B cell (primary cell): ENCODE measurements at regions of chr2 and their contacts with region 1.

Region 1: DNA sequence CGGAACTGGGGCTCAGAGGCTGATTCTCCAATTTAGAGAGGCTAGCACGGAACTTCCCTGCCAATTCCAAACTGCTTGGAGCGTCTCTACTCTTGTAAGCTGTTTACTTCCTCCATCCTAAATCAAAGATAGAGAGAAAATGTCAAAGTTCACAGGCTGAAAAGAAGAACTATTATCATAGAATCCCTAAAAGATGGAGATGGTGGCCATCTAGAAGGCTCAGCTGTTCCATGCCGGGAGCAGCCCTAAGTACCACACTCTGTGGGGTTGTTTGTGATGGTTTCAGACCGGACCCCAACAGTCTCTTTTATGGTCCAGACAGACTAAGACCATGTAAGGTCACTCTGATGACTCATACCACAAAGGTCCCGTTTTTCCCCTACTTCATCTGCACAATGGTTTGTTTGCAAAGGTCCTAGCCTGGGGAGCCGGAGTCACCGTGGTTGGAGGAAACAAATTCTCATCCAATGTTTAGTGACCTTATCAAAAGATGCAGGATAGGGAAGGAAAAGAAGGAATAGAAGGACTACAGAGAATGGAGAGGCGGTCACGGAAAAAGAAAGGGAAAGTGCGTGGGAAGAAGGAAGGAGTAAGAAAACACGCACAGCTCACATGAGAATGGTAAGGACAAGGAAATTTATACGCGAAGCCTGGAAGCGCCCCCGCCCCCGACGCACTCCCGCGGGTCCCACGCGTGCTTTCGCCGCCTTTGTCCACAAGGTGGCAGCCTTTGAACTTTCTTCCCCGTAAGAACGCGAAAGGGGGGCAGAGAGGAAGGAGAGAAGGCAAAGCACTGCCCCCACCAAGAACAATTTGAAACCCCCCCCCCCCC is 453 bp upstream of the ANTXR1 start:
- DNase-seq: peak; percentile 64
- ATAC-seq: peak; percentile 36
- H3K4me3 ChIP-seq: peak overlapping the region in 4 of 5 experiments; percentile 41 to 66 (median 55)
- H3K4me3 Mint-ChIP-seq: peak overlapping the region; percentile 88
- H3K27ac ChIP-seq: no peak overlapping the region
- H3K27ac Mint-ChIP-seq: no peak overlapping the region
- H3K4me1 ChIP-seq: peaks cover 19 to 20% of the 10 kb centered on the region in 2 donors
- H3K4me1 Mint-ChIP-seq: peaks cover 17% of the 10 kb centered on the region
- H3K27me3 ChIP-seq: peaks cover 0 to 41% (median 34%) of the 10 kb centered on the region in 4 experiments
- H3K27me3 Mint-ChIP-seq: peaks cover 58% of the 10 kb centered on the region
- CTCF ChIP-seq: peak; percentile 79

Region 2: GRCh38 chr2:68214381-68214780 is 798.1 kb before region 1 on chr2:
- CTCF ChIA-PET with region 1: no interaction called
- POLR2A ChIA-PET with region 1: no interaction called
- intact Hi-C with region 1: no loop called
- DNase-seq: no peak
- ATAC-seq: peak; percentile 28
- H3K4me3 ChIP-seq: no peak overlapping the region
- H3K4me3 Mint-ChIP-seq: peak overlapping the region; percentile 46
- H3K27ac ChIP-seq: no peak overlapping the region
- H3K27ac Mint-ChIP-seq: peak overlapping the region; percentile 27
- H3K4me1 ChIP-seq: peaks cover 12 to 28% of the 10 kb centered on the region in 2 donors
- H3K4me1 Mint-ChIP-seq: peaks cover 73% of the 10 kb centered on the region
- H3K27me3 ChIP-seq: no peaks in the 10 kb centered on the region
- H3K27me3 Mint-ChIP-seq: no peaks in the 10 kb centered on the region
- CTCF ChIP-seq: no peak

Region 3: GRCh38 chr2:68889500-68890185 is 122.9 kb before region 1 on chr2:
- CTCF ChIA-PET with region 1: no interaction called
- POLR2A ChIA-PET with region 1: no interaction called
- intact Hi-C with region 1: no loop called
- DNase-seq: no peak
- ATAC-seq: no peak
- H3K4me3 ChIP-seq: no peak overlapping the region
- H3K4me3 Mint-ChIP-seq: no peak overlapping the region
- H3K27ac ChIP-seq: no peak overlapping the region
- H3K27ac Mint-ChIP-seq: no peak overlapping the region
- H3K4me1 ChIP-seq: no peaks in the 10 kb centered on the region
- H3K4me1 Mint-ChIP-seq: no peaks in the 10 kb centered on the region
- H3K27me3 ChIP-seq: no peaks in the 10 kb centered on the region
- H3K27me3 Mint-ChIP-seq: no peaks in the 10 kb centered on the region
- CTCF ChIP-seq: no peak

Region 4: DNA sequence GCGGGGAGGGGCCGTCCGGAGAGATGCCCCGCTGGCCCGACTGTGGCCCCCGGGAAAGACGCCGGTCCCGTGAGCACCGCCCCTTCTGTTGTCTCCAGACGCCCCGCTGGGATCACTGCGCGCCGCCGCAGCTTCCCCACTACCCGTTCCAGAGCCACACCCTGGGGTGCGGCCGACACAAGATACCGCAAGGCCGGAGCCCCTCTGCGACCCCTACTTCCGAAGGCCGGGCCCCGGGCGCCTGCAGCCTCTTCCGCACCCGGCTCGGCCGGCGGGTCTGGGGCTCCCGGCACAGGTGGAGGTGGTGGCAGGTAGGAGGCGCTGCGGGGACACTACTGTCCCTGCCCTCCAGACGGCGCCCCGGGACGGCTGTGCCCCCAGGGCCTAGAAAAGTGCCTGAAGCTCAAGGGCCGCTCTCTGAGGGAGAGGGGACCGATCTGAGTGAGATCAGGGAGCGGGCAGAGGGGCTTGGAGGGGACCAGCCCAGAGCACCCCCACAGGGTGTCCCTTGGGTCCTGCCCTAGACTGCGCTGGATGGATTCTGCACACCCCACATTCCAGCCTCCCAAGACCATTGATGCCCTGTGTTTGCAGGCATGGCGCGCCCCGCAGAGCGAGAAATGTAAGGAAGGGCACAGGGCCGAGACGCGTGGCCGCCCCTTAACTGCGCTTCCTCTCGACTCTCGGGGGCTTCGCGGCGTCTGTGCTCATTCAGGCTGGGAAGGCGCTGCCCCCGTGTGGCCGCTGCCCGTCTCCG is 294.5 kb after region 1 on chr2:
- CTCF ChIA-PET with region 1: interaction called, 5 read pairs
- POLR2A ChIA-PET with region 1: no interaction called
- intact Hi-C with region 1: loop called (anchors 1 kb)
- DNase-seq: peak; percentile 80
- ATAC-seq: peak; percentile 89
- H3K4me3 ChIP-seq: peak overlapping the region; percentile 48 to 69 (median 64)
- H3K4me3 Mint-ChIP-seq: peak overlapping the region; percentile 87
- H3K27ac ChIP-seq: no peak overlapping the region
- H3K27ac Mint-ChIP-seq: peak overlapping the region; percentile 32
- H3K4me1 ChIP-seq: peaks cover 19 to 39% of the 10 kb centered on the region in 2 donors
- H3K4me1 Mint-ChIP-seq: peaks cover 39% of the 10 kb centered on the region
- H3K27me3 ChIP-seq: peaks cover 0 to 29% (median 15%) of the 10 kb centered on the region in 4 experiments
- H3K27me3 Mint-ChIP-seq: peaks cover 26% of the 10 kb centered on the region
- CTCF ChIP-seq: peak; percentile 77